ENCODE measurements at regions of chr3 and their contacts with region 1.

Region 1: GRCh38 chr3:44761424-44762169 is at the starts of genes KIAA1143 and KIF15:
- DNase-seq: peak; percentile 96
- ATAC-seq: peak; percentile 96
- H3K4me3 Mint-ChIP-seq: peak within 1 kb of the TSS; percentile 89
- H3K27ac Mint-ChIP-seq: peak within 1 kb of the TSS; percentile 85
- H3K4me1 Mint-ChIP-seq: peaks cover 25% of the 10 kb centered on the region
- H3K27me3 Mint-ChIP-seq: no peaks in the 10 kb centered on the region
- CTCF ChIP-seq: no peak
- total RNA-seq, gene KIAA1143: 35.4 and 43.6 TPM in 2 replicates
- total RNA-seq, gene KIF15: 2.4 and 3.1 TPM in 2 replicates

Region 2: DNA sequence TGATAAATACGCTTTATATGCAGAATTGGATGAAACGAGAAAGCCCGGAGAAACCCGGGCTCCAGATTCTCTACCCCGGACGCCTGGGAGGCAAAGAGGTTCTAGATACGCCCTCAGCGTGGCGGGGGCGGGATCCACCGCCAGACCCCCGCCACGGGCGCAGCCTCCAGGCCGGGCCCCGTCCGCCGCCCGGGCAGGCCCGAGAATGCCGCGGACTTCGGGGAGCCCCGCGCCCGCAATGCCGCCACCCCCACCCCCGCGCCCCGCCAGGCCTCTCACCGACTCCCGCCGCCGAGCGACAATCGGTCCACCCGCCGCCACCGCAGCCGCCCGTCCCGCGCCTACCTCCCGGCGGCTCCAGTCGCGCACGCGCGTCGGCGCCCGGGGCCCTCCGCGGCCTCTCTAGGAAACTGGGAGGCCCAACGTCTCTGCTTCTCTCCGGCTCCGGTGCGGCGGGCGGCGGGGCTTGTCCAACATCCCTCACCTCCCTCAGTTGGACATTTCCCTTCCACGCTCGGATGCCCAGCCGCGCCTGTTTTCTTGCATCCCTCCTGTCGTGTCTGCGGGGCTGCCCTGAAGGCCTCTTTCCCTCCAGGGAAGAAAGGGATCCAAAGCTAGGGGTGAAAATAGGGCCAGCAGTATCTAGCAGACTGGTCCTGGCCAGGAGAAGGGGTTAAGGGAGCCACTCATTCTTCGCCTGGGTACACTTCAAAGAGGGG is 284.1 kb before region 1 on chr3 and contains the start of gene ZNF445:
- CTCF ChIA-PET with region 1: no interaction called
- POLR2A ChIA-PET with region 1: no interaction called
- intact Hi-C with region 1: loop called (anchors 5 kb)
- DNase-seq: peak; percentile 76
- ATAC-seq: peak; percentile 94
- H3K4me3 Mint-ChIP-seq: peak within 1 kb of the TSS; percentile 91
- H3K27ac Mint-ChIP-seq: peak within 1 kb of the TSS; percentile 61
- H3K4me1 Mint-ChIP-seq: peaks cover 25% of the 10 kb centered on the region
- H3K27me3 Mint-ChIP-seq: no peaks in the 10 kb centered on the region
- CTCF ChIP-seq: no peak
- total RNA-seq, gene ZNF445: 17.3 and 19.5 TPM in 2 replicates

Region 3: DNA sequence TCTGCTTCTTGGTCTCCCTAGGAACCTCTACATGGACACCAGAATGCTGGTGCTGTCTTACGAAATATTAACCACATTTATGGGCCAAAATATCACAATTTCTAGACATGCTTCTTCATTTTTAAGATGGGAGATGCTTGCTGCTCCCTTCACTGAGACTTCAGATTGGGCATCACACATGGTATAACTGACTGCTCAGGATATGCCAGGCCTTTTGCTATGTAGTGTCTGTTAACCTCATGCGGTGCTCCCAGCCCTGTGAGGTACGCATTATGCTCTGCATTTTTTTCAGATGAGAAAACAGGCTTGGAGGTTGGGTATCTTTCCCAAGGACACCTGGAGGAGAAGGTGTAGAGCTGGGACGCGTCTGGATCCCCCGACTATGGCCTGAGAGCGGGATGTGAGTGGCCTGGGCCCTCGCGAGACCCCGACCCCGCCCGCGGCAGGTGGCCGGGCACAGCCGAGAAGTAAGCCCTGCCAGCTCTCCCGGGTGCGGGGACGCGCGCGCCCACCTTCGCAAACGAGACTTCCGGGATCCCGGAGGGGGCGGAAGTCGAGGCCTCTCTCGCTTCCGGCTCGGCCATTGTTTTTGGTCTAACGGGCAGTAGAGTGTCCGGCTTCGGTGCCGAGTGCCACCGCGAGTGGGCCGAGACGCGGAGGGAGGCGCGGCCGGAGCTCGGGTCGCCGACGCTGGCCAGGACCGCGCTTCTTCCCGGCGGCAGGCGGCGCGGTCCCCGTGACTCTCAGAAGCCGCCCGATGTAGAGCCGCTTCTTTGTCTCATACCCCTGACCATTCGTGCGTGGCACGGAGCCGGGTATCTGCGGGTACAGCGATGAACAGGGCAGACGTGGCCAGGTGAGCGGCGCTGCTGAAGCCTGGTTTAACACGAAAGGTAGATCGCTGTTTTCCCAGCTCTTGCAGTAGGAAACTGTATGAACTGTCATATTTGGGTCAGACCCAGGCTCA is 206.7 kb before region 1 on chr3 and contains the start of gene ZKSCAN7:
- CTCF ChIA-PET with region 1: no interaction called
- POLR2A ChIA-PET with region 1: no interaction called
- intact Hi-C with region 1: loop called (anchors 5 kb)
- DNase-seq: peak; percentile 56
- ATAC-seq: peak; percentile 86
- H3K4me3 Mint-ChIP-seq: peak within 1 kb of the TSS; percentile 94
- H3K27ac Mint-ChIP-seq: peak within 1 kb of the TSS; percentile 87
- H3K4me1 Mint-ChIP-seq: peaks cover 20% of the 10 kb centered on the region
- H3K27me3 Mint-ChIP-seq: peaks cover 7% of the 10 kb centered on the region
- CTCF ChIP-seq: no peak
- total RNA-seq, gene ZKSCAN7: 6.8 and 9.2 TPM in 2 replicates

Region 4: GRCh38 chr3:44612678-44613077 is 148.9 kb before region 1 on chr3:
- CTCF ChIA-PET with region 1: no interaction called
- POLR2A ChIA-PET with region 1: no interaction called
- intact Hi-C with region 1: no loop called
- DNase-seq: no peak
- ATAC-seq: no peak
- H3K4me3 Mint-ChIP-seq: no peak overlapping the region
- H3K27ac Mint-ChIP-seq: no peak overlapping the region
- H3K4me1 Mint-ChIP-seq: no peaks in the 10 kb centered on the region
- H3K27me3 Mint-ChIP-seq: no peaks in the 10 kb centered on the region
- CTCF ChIP-seq: no peak

Region 5: GRCh38 chr3:44685128-44685800 is 76.3 kb before region 1 on chr3:
- CTCF ChIA-PET with region 1: no interaction called
- POLR2A ChIA-PET with region 1: no interaction called
- intact Hi-C with region 1: loop called (anchors 2 kb)
- DNase-seq: peak; percentile 56
- ATAC-seq: peak; percentile 92
- H3K4me3 Mint-ChIP-seq: peak overlapping the region; percentile 96
- H3K27ac Mint-ChIP-seq: peak overlapping the region; percentile 76
- H3K4me1 Mint-ChIP-seq: peaks cover 19% of the 10 kb centered on the region
- H3K27me3 Mint-ChIP-seq: peaks cover 23% of the 10 kb centered on the region
- CTCF ChIP-seq: no peak

Region 6: GRCh38 chr3:44729384-44729910 is 32.1 kb before region 1 on chr3 and contains the start of gene ZNF501:
- CTCF ChIA-PET with region 1: no interaction called
- POLR2A ChIA-PET with region 1: interaction called, 23 read pairs
- intact Hi-C with region 1: loop called (anchors 1 kb)
- DNase-seq: peak; percentile 80
- ATAC-seq: peak; percentile 98
- H3K4me3 Mint-ChIP-seq: peak within 1 kb of the TSS; percentile 92
- H3K27ac Mint-ChIP-seq: peak within 1 kb of the TSS; percentile 75
- H3K4me1 Mint-ChIP-seq: peaks cover 15% of the 10 kb centered on the region
- H3K27me3 Mint-ChIP-seq: no peaks in the 10 kb centered on the region
- CTCF ChIP-seq: no peak
- total RNA-seq, gene ZNF501: 6.2 and 6.5 TPM in 2 replicates

Measured in activated B cell treated with CpG ODN at 0.5 μM for 24 hours (primary cell).